Ovary (tissue), 10 donors: ENCODE measurements at regions of chr16 and their contacts with region 1.

Region 1: DNA sequence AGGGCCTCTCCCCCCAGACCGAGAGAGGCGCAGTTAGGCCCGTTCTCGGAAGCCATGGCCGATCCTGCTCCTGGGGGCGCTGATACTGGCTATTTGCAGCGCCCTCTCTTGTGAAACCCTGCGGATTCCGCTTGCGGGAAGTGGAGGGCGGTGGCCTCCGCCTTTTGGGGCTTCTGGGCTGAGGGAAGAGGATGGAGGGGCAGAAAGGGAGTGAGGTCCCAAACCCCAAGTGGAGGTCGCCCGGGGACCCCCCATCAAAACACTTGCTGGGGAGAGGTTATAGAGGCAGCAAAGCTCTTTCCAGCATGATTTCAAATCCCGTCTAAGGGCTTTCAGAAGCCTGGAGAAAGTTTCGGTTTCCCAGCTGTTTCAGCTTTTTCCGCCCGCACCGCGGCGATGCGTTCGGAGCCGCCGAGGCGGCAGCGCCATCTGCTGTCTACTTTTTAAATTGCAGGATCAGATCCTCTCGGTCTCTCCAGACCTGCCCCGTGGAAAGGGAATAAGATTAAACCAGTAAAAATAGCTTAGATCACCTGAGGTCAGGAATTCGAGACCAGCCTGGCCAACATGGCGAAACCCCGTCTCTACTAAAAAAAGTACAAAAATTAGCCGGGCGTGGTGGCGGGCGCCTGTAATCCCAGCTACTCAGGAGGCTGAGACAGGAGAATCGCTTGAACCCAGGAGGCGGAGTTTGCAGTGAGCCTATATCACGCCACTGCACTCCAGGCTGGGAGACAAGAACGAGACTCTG is 15.8 kb downstream of the SNX20 start:
- DNase-seq: peak; percentile 74 to 88 (median 85)
- H3K4me3 ChIP-seq: peak overlapping the region; percentile 38
- H3K27ac ChIP-seq: peak overlapping the region in 1 of 2 donors; percentile 55
- H3K4me1 ChIP-seq: peaks cover 1% of the 10 kb centered on the region
- H3K27me3 ChIP-seq: no peaks in the 10 kb centered on the region
- CTCF ChIP-seq: peak; percentile 60 to 82 (median 63)
- EP300 ChIP-seq: no peak
- POLR2A ChIP-seq: no peak

Region 2: DNA sequence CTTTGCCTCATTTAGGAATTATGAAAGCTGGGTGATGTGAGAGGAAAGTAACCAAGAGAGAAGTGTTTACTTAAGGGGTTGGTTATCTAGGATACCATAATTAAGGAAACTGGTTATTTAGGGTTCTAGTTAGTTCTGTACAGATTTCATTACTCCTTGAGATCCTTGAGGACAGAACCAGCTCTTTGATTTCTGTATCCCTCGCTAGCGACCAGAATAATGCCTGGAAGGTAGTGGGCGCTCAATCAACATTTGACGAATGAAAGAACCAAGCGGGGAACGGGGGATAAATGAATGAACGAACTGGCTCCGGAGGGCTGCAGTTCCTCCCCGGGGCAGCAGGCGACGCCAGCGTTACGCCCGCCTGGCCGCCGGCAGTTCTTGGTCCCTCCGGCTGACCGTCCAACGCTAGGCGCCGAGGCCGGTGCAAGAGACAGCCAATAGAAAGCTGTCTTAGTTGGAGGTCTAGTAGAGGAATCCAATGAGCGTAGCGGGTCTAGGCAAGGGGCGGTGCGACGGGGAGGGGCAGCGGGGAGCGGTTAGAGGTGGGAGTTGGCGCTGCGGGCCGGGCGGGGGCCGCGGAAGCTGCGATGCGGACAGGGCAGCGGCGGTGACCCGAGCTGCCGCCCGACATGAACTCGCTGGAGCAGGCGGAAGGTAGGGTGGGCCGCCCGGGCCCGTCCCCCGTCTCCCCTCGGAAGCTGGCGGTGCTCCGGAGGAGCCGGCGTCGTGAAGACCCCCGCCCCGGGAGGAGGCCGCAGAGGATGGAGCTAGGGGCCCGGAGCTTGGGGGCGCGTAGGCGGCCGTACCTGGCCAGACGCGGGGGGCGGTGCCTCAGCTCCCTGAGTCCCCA is 640.4 kb before region 1 on chr16 and contains the start of gene CNEP1R1:
- intact Hi-C with region 1: loop called in 1 of 4 experiments (anchors 10 kb)
- DNase-seq: peak; percentile 91 to 96 (median 94)
- H3K4me3 ChIP-seq: peak within 1 kb of the TSS; percentile 98
- H3K27ac ChIP-seq: peak within 1 kb of the TSS in 1 of 2 donors; percentile 73
- H3K4me1 ChIP-seq: peaks cover 4% of the 10 kb centered on the region
- H3K27me3 ChIP-seq: no peaks in the 10 kb centered on the region
- CTCF ChIP-seq: peak; percentile 99 to 100 (median 100)
- EP300 ChIP-seq: no peak
- POLR2A ChIP-seq: no peak
- total RNA-seq, gene CNEP1R1: 9.4 to 19.0 (median 13.3) TPM

Region 3: GRCh38 chr16:50368410-50369132 is 296.7 kb before region 1 on chr16 and contains the start of gene BRD7:
- intact Hi-C with region 1: loop called (anchors 5 to 10 kb)
- DNase-seq: peak; percentile 58 to 87 (median 72)
- H3K4me3 ChIP-seq: peak within 1 kb of the TSS; percentile 77
- H3K27ac ChIP-seq: peak within 1 kb of the TSS in 1 of 2 donors; percentile 46
- H3K4me1 ChIP-seq: peaks cover 2% of the 10 kb centered on the region
- H3K27me3 ChIP-seq: no peaks in the 10 kb centered on the region
- CTCF ChIP-seq: peak in 2 of 3 donors; percentile 14 to 31
- EP300 ChIP-seq: no peak
- POLR2A ChIP-seq: no peak
- total RNA-seq, gene BRD7: 30.0 to 58.7 (median 53.5) TPM

Region 4: DNA sequence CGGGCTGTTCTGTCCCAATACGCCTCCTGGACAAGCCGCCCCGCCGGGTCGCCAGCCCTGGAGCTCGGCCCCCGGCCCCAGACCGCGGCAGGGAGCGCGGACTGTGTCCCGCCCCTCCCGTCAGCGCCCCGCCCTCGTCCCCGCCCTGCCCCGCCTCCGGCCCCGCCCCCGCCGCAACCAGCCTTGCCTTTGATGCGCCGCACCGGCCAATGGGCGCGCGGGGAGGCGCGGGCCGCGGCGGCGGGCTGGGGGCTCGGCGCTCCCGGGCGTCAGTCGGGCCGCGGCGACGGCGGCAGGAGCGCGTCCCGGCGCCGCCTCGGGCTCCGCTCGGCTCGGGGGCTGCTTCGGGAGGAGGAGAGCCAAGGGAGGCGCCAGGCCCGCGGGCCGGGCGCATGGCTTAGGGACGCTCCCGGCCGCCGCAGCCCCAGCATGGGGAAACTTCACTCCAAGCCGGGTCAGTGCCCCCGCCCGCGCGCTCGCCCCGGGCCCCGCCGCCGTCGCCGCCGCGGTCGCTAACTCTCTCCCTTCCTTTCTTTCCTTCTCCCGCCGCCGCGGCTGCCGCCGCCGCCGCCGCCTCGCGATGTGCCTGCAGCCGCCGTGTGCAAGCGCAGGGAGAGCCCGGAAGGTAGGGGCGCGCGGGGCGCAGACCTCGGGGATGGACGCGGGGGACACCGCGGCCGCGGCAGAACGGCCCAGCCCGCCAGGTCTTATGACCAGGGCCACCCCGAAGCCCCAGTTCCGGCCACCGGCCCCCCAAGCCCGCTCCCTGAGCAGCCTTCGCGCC is 117.0 kb before region 1 on chr16 and contains the start of gene NKD1:
- intact Hi-C with region 1: loop called in 1 of 4 experiments (anchors 10 kb)
- DNase-seq: peak; percentile 80 to 86 (median 84)
- H3K4me3 ChIP-seq: peak within 1 kb of the TSS; percentile 74
- H3K27ac ChIP-seq: peak within 1 kb of the TSS; percentile 51 to 68
- H3K4me1 ChIP-seq: peaks cover 4% of the 10 kb centered on the region
- H3K27me3 ChIP-seq: no peaks in the 10 kb centered on the region
- CTCF ChIP-seq: no peak
- EP300 ChIP-seq: no peak
- POLR2A ChIP-seq: peak; percentile 56
- total RNA-seq, gene NKD1: 3.3 to 72.1 (median 17.4) TPM

Region 5: GRCh38 chr16:50917950-50918703 is 252.8 kb after region 1 on chr16:
- intact Hi-C with region 1: no loop called
- DNase-seq: no peak
- H3K4me3 ChIP-seq: no peak overlapping the region
- H3K27ac ChIP-seq: no peak overlapping the region
- H3K4me1 ChIP-seq: no peaks in the 10 kb centered on the region
- H3K27me3 ChIP-seq: no peaks in the 10 kb centered on the region
- CTCF ChIP-seq: no peak
- EP300 ChIP-seq: no peak
- POLR2A ChIP-seq: no peak

Region 6: GRCh38 chr16:51048544-51048943 is 383.2 kb after region 1 on chr16:
- intact Hi-C with region 1: no loop called
- DNase-seq: no peak
- H3K4me3 ChIP-seq: no peak overlapping the region
- H3K27ac ChIP-seq: no peak overlapping the region
- H3K4me1 ChIP-seq: no peaks in the 10 kb centered on the region
- H3K27me3 ChIP-seq: no peaks in the 10 kb centered on the region
- CTCF ChIP-seq: no peak
- EP300 ChIP-seq: no peak
- POLR2A ChIP-seq: no peak

Region 7: GRCh38 chr16:51807551-51807950 is 1142.2 kb after region 1 on chr16:
- intact Hi-C with region 1: loop called in 1 of 4 experiments (anchors 5 kb)
- DNase-seq: no peak
- H3K4me3 ChIP-seq: no peak overlapping the region
- H3K27ac ChIP-seq: no peak overlapping the region
- H3K4me1 ChIP-seq: no peaks in the 10 kb centered on the region
- H3K27me3 ChIP-seq: no peaks in the 10 kb centered on the region
- CTCF ChIP-seq: no peak
- EP300 ChIP-seq: no peak
- POLR2A ChIP-seq: no peak